ENCODE measurements at regions of chr11 and their contacts with region 1.

Region 1: DNA sequence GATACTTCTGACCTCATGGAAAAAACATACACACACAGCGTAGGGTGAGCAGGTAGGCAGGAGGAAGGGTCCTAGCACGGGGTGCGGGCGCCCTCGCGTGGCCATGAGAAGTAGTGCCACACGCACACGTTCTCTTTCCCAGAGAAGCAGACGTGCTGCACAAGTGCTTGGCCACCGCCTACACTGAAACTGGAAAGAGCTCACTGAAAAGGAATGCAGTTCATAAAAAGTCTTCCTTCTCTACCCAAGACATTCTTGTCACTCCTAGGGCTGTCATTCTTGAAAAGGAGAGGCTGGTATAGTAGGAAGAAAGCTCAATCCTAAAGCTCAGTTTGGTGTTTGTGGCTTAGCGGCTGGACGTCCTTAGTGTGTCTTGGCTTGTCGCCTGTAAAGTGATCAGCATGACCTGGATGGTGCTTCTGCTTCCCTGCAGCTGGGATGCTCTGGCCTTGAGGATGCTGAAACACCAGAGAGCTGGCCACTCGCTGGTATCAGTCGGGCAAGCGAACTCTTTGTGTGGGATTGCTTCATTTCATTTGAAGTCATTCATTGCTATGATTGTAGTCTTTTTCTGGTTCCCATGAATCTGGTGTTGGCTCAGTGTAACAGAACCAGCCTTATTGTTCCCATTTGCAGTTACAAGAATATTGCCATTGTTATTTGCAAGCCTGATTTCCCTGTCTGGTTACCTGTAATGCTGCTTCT is 303.8 kb downstream of the NTM start:
- DNase-seq: no peak
- H3K4me3 ChIP-seq: no peak overlapping the region
- H3K27ac ChIP-seq: no peak overlapping the region
- H3K4me1 ChIP-seq: peaks cover 0 to under 1% (median 0%) of the 10 kb centered on the region in 6 donors
- H3K27me3 ChIP-seq: peaks cover 0 to 8% (median 0%) of the 10 kb centered on the region in 7 donors
- CTCF ChIP-seq: peak; percentile 11 to 90 (median 80)
- POLR2A ChIP-seq: no peak

Region 2: GRCh38 chr11:130924770-130925169 is 749.4 kb before region 1 on chr11:
- intact Hi-C with region 1: loop called (anchors 5 kb)
- DNase-seq: no peak
- H3K4me3 ChIP-seq: no peak overlapping the region
- H3K27ac ChIP-seq: no peak overlapping the region
- H3K4me1 ChIP-seq: no peaks in the 10 kb centered on the region
- H3K27me3 ChIP-seq: peaks cover 0 to 20% (median 0%) of the 10 kb centered on the region in 7 donors
- CTCF ChIP-seq: no peak
- POLR2A ChIP-seq: no peak

Region 3: DNA sequence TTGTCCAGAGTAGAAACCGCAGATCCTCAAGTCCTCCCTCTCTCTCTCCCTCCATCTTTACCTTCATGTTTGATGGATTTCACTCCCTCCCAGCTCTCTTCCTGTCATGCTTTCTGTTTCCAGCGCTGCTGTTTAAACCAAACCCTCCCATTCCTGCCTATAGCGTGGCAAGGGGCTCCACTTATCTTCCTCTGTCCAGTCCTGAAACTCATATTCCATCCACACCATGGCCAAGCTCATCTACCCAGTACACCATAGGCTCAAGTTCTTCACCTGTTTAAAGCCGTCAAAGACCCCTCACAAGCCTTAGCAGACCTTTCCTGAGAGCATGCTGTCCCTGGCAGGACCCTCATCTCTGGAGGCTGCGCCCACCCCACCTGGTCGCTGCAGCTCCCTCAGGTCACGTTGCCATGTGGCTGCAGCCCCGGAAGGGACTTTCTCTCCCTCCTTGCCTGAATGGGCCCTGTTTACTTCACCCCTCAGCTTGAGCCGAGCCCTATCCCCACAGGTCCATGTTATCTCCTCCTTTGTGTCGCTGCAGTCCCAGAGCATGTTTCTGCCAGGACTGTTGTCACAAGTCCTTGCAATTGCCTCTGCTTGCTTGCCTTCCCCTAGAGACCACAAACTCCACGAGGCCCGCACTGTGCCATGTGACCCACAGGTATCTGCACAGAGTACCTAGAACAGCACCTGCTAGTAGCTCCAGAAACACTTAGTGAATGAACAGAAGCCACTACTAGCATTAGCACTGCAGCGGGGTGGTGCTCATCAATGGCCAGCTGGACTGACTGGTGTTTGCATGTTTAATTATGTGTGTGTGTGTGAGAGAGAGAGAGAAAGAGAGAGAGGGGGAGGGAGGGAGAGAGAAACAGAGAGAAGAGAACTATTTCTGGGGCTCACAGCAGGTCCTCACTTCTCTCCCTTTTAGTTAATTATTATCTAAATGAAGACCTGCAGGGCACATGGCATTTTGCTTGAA is 608.5 kb before region 1 on chr11:
- intact Hi-C with region 1: loop called (anchors 5 kb)
- DNase-seq: no peak
- H3K4me3 ChIP-seq: no peak overlapping the region
- H3K27ac ChIP-seq: no peak overlapping the region
- H3K4me1 ChIP-seq: no peaks in the 10 kb centered on the region
- H3K27me3 ChIP-seq: peaks cover 0 to 25% (median 4%) of the 10 kb centered on the region in 7 donors
- CTCF ChIP-seq: no peak
- POLR2A ChIP-seq: no peak

Region 4: GRCh38 chr11:131579932-131580387 is 94.2 kb before region 1 on chr11:
- intact Hi-C with region 1: loop called (anchors 5 kb)
- DNase-seq: no peak
- H3K4me3 ChIP-seq: no peak overlapping the region
- H3K27ac ChIP-seq: no peak overlapping the region
- H3K4me1 ChIP-seq: no peaks in the 10 kb centered on the region
- H3K27me3 ChIP-seq: peaks cover 0 to 18% (median 0%) of the 10 kb centered on the region in 7 donors
- CTCF ChIP-seq: peak in 6 of 11 experiments; percentile 23 to 49 (median 32)
- POLR2A ChIP-seq: no peak

Measured in spleen (tissue), 13 donors.